Activated T-helper 1 cell treated with anti-CD3 and anti-CD28 coated beads, Interleukin-12 subunit alpha, Interleukin-12 subunit beta, Interleukin-2, Interleukin-4 antibody, amounts not matched to agents 30 ng/mL and 10 ng/mL and 1 ng/mL, durations not matched to agents 14 hours and 24 hours and 36 hours (primary cell): ENCODE measurements at regions of chr2 and their contacts with region 1.

Region 1: GRCh38 chr2:39008665-39009064 is 112.2 kb downstream of the SOS1 start:
- DNase-seq: no peak
- H3K4me3 Mint-ChIP-seq: peak overlapping the region; percentile 45
- H3K27ac Mint-ChIP-seq: peak overlapping the region; percentile 94
- H3K4me1 Mint-ChIP-seq: peaks cover 19% of the 10 kb centered on the region
- H3K27me3 Mint-ChIP-seq: no peaks in the 10 kb centered on the region

Region 2: GRCh38 chr2:38892819-38893218 is 115.8 kb before region 1 on chr2:
- intact Hi-C with region 1: no loop called
- DNase-seq: no peak
- H3K4me3 Mint-ChIP-seq: no peak overlapping the region
- H3K27ac Mint-ChIP-seq: no peak overlapping the region
- H3K4me1 Mint-ChIP-seq: no peaks in the 10 kb centered on the region
- H3K27me3 Mint-ChIP-seq: peaks cover 7% of the 10 kb centered on the region

Region 3: DNA sequence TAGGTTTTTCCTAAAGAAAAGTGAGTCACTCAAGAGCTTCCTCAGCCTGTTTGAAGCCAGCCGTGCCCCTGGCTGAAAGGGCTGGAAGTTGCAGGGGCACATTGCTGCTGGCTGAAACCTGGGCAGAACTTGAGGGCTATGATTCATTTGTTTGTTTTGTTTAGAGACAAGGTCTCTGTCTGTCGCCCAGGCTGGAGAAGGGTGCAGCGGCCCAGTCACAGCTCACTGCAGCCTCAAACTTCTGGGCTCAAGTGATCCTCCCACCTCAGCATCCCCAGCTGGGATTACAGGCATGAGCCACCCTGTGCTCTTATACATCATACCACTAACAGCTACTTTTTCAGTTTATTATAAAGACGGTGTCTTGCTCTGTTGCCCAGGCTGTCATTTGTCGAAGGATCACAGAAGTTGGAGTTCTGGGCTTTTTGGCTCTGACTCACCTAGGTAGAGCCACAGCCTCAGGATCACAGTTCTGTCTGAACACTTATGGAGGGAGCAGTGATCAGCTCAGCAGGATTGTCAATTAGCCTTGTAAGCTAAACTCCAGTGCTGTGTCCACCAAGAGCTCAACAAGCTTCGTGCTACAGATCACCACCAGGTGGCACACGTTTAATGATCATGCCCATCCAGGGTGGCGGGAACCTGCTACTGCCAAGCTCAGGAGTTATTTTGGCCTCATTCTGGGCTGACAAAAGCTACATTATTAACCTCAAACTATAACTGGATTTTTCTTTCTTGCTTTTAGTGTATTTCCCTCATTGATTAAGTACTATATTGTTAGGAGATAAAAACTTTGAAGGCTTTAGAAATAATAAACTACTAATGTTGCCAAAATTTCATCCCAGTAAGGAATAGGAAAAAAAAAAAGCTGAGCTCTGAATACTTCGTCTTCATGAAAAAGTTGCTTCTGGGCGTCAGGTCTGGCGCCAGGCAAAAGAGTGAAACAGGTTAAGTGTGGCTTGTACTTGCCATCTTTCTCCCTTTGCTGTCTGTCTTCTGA is 61.1 kb before region 1 on chr2:
- intact Hi-C with region 1: no loop called
- DNase-seq: peak; percentile 38
- H3K4me3 Mint-ChIP-seq: no peak overlapping the region
- H3K27ac Mint-ChIP-seq: no peak overlapping the region
- H3K4me1 Mint-ChIP-seq: no peaks in the 10 kb centered on the region
- H3K27me3 Mint-ChIP-seq: peaks cover 6% of the 10 kb centered on the region

Region 4: GRCh38 chr2:38997781-38998180 is 10.9 kb before region 1 on chr2:
- intact Hi-C with region 1: loop called (anchors 2 kb)
- DNase-seq: no peak
- H3K4me3 Mint-ChIP-seq: no peak overlapping the region
- H3K27ac Mint-ChIP-seq: no peak overlapping the region
- H3K4me1 Mint-ChIP-seq: peaks cover 8% of the 10 kb centered on the region
- H3K27me3 Mint-ChIP-seq: no peaks in the 10 kb centered on the region

Region 5: DNA sequence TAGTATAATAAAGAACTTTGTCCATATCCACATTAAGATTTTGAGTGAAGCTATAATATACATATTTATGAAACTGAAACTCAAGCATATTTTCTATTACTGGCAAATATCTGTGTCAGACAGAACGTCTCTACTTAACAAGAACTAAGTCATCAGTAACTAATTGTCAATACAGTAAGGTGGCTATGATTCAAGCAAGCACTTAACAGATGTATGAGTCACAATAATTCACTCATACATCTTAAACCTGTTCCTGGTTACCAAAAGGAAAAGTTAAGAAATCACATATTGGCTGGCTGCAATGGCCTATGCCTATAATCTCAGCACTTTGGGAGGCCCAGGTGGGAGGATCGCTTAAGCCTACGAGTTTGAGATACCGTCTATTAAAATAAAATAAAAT is 16.2 kb after region 1 on chr2:
- intact Hi-C with region 1: loop called (anchors 2 kb)
- DNase-seq: no peak
- H3K4me3 Mint-ChIP-seq: no peak overlapping the region
- H3K27ac Mint-ChIP-seq: no peak overlapping the region
- H3K4me1 Mint-ChIP-seq: no peaks in the 10 kb centered on the region
- H3K27me3 Mint-ChIP-seq: no peaks in the 10 kb centered on the region

Region 6: GRCh38 chr2:39050109-39050508 is 41.4 kb after region 1 on chr2:
- intact Hi-C with region 1: loop called (anchors 5 kb)
- DNase-seq: no peak
- H3K4me3 Mint-ChIP-seq: no peak overlapping the region
- H3K27ac Mint-ChIP-seq: no peak overlapping the region
- H3K4me1 Mint-ChIP-seq: no peaks in the 10 kb centered on the region
- H3K27me3 Mint-ChIP-seq: no peaks in the 10 kb centered on the region

Region 7: DNA sequence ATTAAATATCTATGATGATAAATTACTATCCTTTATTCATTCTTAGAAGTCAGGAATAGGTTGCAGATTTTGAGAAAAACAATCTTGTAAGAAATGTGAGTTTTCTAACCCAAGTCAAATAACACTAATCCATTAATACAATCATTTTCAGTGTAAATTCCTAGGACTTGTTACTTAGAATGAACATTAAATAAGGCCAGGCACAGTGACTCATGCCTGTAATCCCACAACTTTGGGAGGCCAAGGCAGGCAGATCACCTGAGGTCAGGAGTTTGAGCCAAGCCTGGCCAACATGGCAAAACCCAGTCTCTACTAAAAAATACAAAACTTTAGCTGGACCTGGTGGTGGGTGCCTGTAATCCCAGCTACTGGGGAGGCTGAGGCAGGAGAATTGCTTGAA is 280.9 kb after region 1 on chr2:
- intact Hi-C with region 1: no loop called
- DNase-seq: no peak
- H3K4me3 Mint-ChIP-seq: no peak overlapping the region
- H3K27ac Mint-ChIP-seq: no peak overlapping the region
- H3K4me1 Mint-ChIP-seq: no peaks in the 10 kb centered on the region
- H3K27me3 Mint-ChIP-seq: no peaks in the 10 kb centered on the region